ENCODE measurements at regions of chr17 and their contacts with region 1.

Region 1: GRCh38 chr17:60677308-60678124 is at the start of gene BCAS3:
- DNase-seq: peak; percentile 92 to 98 (median 96)
- ATAC-seq: peak; percentile 95
- H3K4me3 ChIP-seq: peak within 1 kb of the TSS; percentile 75 to 76
- H3K4me3 Mint-ChIP-seq: peak within 1 kb of the TSS; percentile 97
- H3K27ac ChIP-seq: peak within 1 kb of the TSS; percentile 58 to 74
- H3K27ac Mint-ChIP-seq: peak within 1 kb of the TSS; percentile 98
- H3K4me1 ChIP-seq: peaks cover 11% of the 10 kb centered on the region
- H3K4me1 Mint-ChIP-seq: peaks cover 22% of the 10 kb centered on the region
- H3K27me3 ChIP-seq: no peaks in the 10 kb centered on the region
- H3K27me3 Mint-ChIP-seq: no peaks in the 10 kb centered on the region
- CTCF ChIP-seq: no peak
- total RNA-seq, gene BCAS3: 17.3 to 20.3 TPM

Region 2: DNA sequence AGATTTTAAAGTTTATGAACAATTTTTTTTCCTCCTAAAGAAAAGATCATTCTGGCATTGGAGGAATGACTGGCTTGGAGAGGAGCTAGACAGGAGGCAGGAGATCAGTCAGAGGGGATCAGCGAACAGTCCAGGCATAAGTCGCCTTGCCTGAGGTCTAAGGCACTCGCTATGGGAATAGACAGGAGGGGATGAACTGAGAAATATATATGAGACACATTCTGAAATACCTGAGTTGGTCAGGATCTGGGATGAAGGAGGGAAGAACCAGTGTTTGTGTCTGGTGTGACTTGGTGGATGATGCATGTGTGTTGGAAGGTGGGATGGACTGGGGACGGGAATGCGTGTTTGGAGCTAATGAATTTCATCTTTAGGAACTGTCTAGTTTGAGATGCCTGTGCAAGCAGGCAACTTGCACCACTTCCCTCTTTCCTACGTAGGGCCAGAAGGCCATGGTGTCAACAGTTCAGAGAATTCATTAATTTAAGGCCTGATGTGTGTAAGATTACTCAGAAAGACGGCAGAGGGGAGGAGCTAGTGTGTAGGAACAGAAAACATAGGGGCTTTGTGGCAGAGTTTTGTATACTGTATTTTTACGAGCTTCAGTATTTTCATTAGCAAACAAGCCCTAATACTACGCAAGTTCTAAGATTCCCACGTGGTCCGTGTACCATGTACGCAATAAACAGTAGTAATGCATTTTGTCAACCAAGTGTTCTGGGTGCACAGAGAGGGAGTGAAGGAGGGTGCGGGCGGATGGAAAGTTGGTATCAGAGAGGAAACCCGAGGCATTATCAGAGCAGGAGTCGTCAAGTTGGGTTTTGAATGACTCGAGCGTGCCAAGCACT is 599.6 kb before region 1 on chr17:
- CTCF ChIA-PET with region 1: no interaction called
- POLR2A ChIA-PET with region 1: no interaction called
- intact Hi-C with region 1: loop called in 1 of 2 experiments (anchors 1 kb)
- DNase-seq: peak in 2 of 9 experiments; percentile 49 to 51
- ATAC-seq: peak; percentile 66
- H3K4me3 ChIP-seq: peak overlapping the region; percentile 69 to 83
- H3K4me3 Mint-ChIP-seq: peak overlapping the region; percentile 89
- H3K27ac ChIP-seq: peak overlapping the region; percentile 41 to 64
- H3K27ac Mint-ChIP-seq: peak overlapping the region; percentile 87
- H3K4me1 ChIP-seq: peaks cover 7% of the 10 kb centered on the region
- H3K4me1 Mint-ChIP-seq: peaks cover 24% of the 10 kb centered on the region
- H3K27me3 ChIP-seq: no peaks in the 10 kb centered on the region
- H3K27me3 Mint-ChIP-seq: no peaks in the 10 kb centered on the region
- CTCF ChIP-seq: no peak

Region 3: GRCh38 chr17:60525685-60526514 is 151.6 kb before region 1 on chr17 and contains the start of gene APPBP2:
- CTCF ChIA-PET with region 1: interaction called, 3 read pairs
- POLR2A ChIA-PET with region 1: interaction called, 3 read pairs
- intact Hi-C with region 1: loop called (anchors 1 to 2 kb)
- DNase-seq: peak; percentile 37 to 89 (median 73)
- ATAC-seq: peak; percentile 86
- H3K4me3 ChIP-seq: peak within 1 kb of the TSS; percentile 85 to 86
- H3K4me3 Mint-ChIP-seq: peak within 1 kb of the TSS; percentile 99
- H3K27ac ChIP-seq: peak within 1 kb of the TSS; percentile 95 to 96
- H3K27ac Mint-ChIP-seq: peak within 1 kb of the TSS; percentile 98
- H3K4me1 ChIP-seq: peaks cover 29% of the 10 kb centered on the region
- H3K4me1 Mint-ChIP-seq: peaks cover 53% of the 10 kb centered on the region
- H3K27me3 ChIP-seq: no peaks in the 10 kb centered on the region
- H3K27me3 Mint-ChIP-seq: no peaks in the 10 kb centered on the region
- CTCF ChIP-seq: no peak
- total RNA-seq, gene APPBP2: 19.9 to 20.1 TPM

Region 4: GRCh38 chr17:60599620-60600489 is 77.7 kb before region 1 on chr17 and contains the start of gene PPM1D:
- CTCF ChIA-PET with region 1: no interaction called
- POLR2A ChIA-PET with region 1: interaction called, 11 read pairs
- intact Hi-C with region 1: loop called (anchors 1 kb)
- DNase-seq: peak; percentile 92 to 99 (median 98)
- ATAC-seq: peak; percentile 93
- H3K4me3 ChIP-seq: peak within 1 kb of the TSS; percentile 84 to 97
- H3K4me3 Mint-ChIP-seq: peak within 1 kb of the TSS; percentile 94
- H3K27ac ChIP-seq: peak within 1 kb of the TSS; percentile 76 to 96
- H3K27ac Mint-ChIP-seq: peak within 1 kb of the TSS; percentile 94
- H3K4me1 ChIP-seq: peaks cover 11% of the 10 kb centered on the region
- H3K4me1 Mint-ChIP-seq: peaks cover 38% of the 10 kb centered on the region
- H3K27me3 ChIP-seq: no peaks in the 10 kb centered on the region
- H3K27me3 Mint-ChIP-seq: no peaks in the 10 kb centered on the region
- CTCF ChIP-seq: no peak
- total RNA-seq, gene PPM1D: 21.0 to 21.1 TPM

Region 5: GRCh38 chr17:61862975-61863800 is 1185.7 kb after region 1 on chr17 and contains the start of gene BRIP1:
- CTCF ChIA-PET with region 1: no interaction called
- POLR2A ChIA-PET with region 1: no interaction called
- intact Hi-C with region 1: loop called (anchors 1 to 5 kb)
- DNase-seq: peak; percentile 71 to 94 (median 86)
- ATAC-seq: peak; percentile 97
- H3K4me3 ChIP-seq: peak within 1 kb of the TSS; percentile 62 to 95
- H3K4me3 Mint-ChIP-seq: peak within 1 kb of the TSS; percentile 97
- H3K27ac ChIP-seq: peak within 1 kb of the TSS; percentile 57 to 66
- H3K27ac Mint-ChIP-seq: peak within 1 kb of the TSS; percentile 89
- H3K4me1 ChIP-seq: peaks cover 6% of the 10 kb centered on the region
- H3K4me1 Mint-ChIP-seq: peaks cover 20% of the 10 kb centered on the region
- H3K27me3 ChIP-seq: no peaks in the 10 kb centered on the region
- H3K27me3 Mint-ChIP-seq: no peaks in the 10 kb centered on the region
- CTCF ChIP-seq: no peak
- total RNA-seq, gene BRIP1: 0.57 to 1.5 TPM

Region 6: GRCh38 chr17:61927200-61928165 is 1250.0 kb after region 1 on chr17 and contains the start of gene INTS2:
- CTCF ChIA-PET with region 1: no interaction called
- POLR2A ChIA-PET with region 1: no interaction called
- intact Hi-C with region 1: loop called in 1 of 2 experiments (anchors 2 kb)
- DNase-seq: peak; percentile 92 to 98 (median 96)
- ATAC-seq: peak; percentile 84
- H3K4me3 ChIP-seq: peak within 1 kb of the TSS; percentile 80 to 91
- H3K4me3 Mint-ChIP-seq: peak within 1 kb of the TSS; percentile 90
- H3K27ac ChIP-seq: peak within 1 kb of the TSS; percentile 71 to 92
- H3K27ac Mint-ChIP-seq: peak within 1 kb of the TSS; percentile 98
- H3K4me1 ChIP-seq: peaks cover 14% of the 10 kb centered on the region
- H3K4me1 Mint-ChIP-seq: peaks cover 22% of the 10 kb centered on the region
- H3K27me3 ChIP-seq: no peaks in the 10 kb centered on the region
- H3K27me3 Mint-ChIP-seq: peaks cover 2% of the 10 kb centered on the region
- CTCF ChIP-seq: no peak
- total RNA-seq, gene INTS2: 9.4 to 9.6 TPM

Region 7: GRCh38 chr17:62478433-62478879 is 1800.9 kb after region 1 on chr17 and contains the start of gene TLK2:
- CTCF ChIA-PET with region 1: no interaction called
- POLR2A ChIA-PET with region 1: no interaction called
- intact Hi-C with region 1: loop called in 1 of 2 experiments (anchors 10 kb)
- DNase-seq: peak; percentile 47 to 89 (median 74)
- ATAC-seq: peak; percentile 66
- H3K4me3 ChIP-seq: peak within 1 kb of the TSS; percentile 37 to 55
- H3K4me3 Mint-ChIP-seq: peak within 1 kb of the TSS; percentile 88
- H3K27ac ChIP-seq: peak within 1 kb of the TSS; percentile 61 to 74
- H3K27ac Mint-ChIP-seq: peak within 1 kb of the TSS; percentile 95
- H3K4me1 ChIP-seq: peaks cover 12% of the 10 kb centered on the region
- H3K4me1 Mint-ChIP-seq: peaks cover 40% of the 10 kb centered on the region
- H3K27me3 ChIP-seq: no peaks in the 10 kb centered on the region
- H3K27me3 Mint-ChIP-seq: no peaks in the 10 kb centered on the region
- CTCF ChIP-seq: no peak
- total RNA-seq, gene TLK2: 91.1 to 101 TPM